Naive thymus-derived CD4-positive, alpha-beta T cell (primary cell): ENCODE measurements at regions of chr3 and their contacts with region 1.

Region 1: GRCh38 chr3:98039322-98040024 is 4.4 kb upstream of the GABRR3 start:
- DNase-seq: peak; percentile 51 to 91 (median 89)
- ATAC-seq: peak; percentile 98
- H3K4me3 ChIP-seq: peak overlapping the region; percentile 59
- H3K4me3 Mint-ChIP-seq: peak overlapping the region; percentile 11 to 95 (median 85)
- H3K27ac ChIP-seq: peak overlapping the region; percentile 75
- H3K27ac Mint-ChIP-seq: peak overlapping the region; percentile 57 to 99 (median 94)
- H3K4me1 ChIP-seq: no peaks in the 10 kb centered on the region
- H3K4me1 Mint-ChIP-seq: peaks cover 0 to 22% (median 0%) of the 10 kb centered on the region in 7 donors
- H3K27me3 ChIP-seq: peaks cover 0 to 3% of the 10 kb centered on the region in 2 donors
- H3K27me3 Mint-ChIP-seq: peaks cover 0 to 43% (median 17%) of the 10 kb centered on the region in 5 donors

Region 2: GRCh38 chr3:97821810-97822775 is 217.4 kb before region 1 on chr3 and contains the start of gene CRYBG3:
- CTCF ChIA-PET with region 1: no interaction called
- POLR2A ChIA-PET with region 1: no interaction called
- intact Hi-C with region 1: loop called in 1 of 2 experiments (anchors 1 kb)
- DNase-seq: peak; percentile 64 to 93 (median 81)
- ATAC-seq: peak; percentile 98
- H3K4me3 ChIP-seq: peak within 1 kb of the TSS; percentile 83
- H3K4me3 Mint-ChIP-seq: peak within 1 kb of the TSS; percentile 93 to 98 (median 95)
- H3K27ac ChIP-seq: peak within 1 kb of the TSS; percentile 52
- H3K27ac Mint-ChIP-seq: peak within 1 kb of the TSS; percentile 76 to 98 (median 87)
- H3K4me1 ChIP-seq: peaks cover 0 to 6% of the 10 kb centered on the region in 2 donors
- H3K4me1 Mint-ChIP-seq: peaks cover 14 to 36% (median 21%) of the 10 kb centered on the region in 7 donors
- H3K27me3 ChIP-seq: peaks cover 0 to 3% of the 10 kb centered on the region in 2 donors
- H3K27me3 Mint-ChIP-seq: peaks cover 4 to 29% (median 26%) of the 10 kb centered on the region in 5 donors
- total RNA-seq, gene CRYBG3: 1.8 to 11.2 (median 5.1) TPM

Region 3: DNA sequence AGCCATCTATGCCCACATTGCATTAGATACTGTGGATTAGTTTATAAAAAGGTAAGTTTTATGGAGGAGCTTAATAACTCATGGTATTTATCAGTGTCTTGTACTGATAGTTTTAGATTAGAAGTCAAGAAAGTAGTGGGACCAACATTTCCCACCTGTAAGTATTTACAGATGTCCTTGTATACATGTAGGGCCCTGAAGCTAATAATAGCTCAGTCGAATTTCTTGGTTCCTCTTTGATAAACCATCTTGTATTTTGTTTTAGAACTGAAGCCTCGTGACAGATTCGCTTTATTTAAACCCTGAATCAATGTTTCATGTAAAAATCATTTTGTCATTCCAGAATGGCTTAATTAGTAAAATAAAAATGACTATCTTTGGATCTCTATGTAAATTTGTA is 144.3 kb before region 1 on chr3:
- CTCF ChIA-PET with region 1: no interaction called
- POLR2A ChIA-PET with region 1: no interaction called
- intact Hi-C with region 1: no loop called
- DNase-seq: no peak
- ATAC-seq: no peak
- H3K4me3 ChIP-seq: no peak overlapping the region
- H3K4me3 Mint-ChIP-seq: no peak overlapping the region
- H3K27ac ChIP-seq: no peak overlapping the region
- H3K27ac Mint-ChIP-seq: no peak overlapping the region
- H3K4me1 ChIP-seq: no peaks in the 10 kb centered on the region
- H3K4me1 Mint-ChIP-seq: no peaks in the 10 kb centered on the region
- H3K27me3 ChIP-seq: no peaks in the 10 kb centered on the region
- H3K27me3 Mint-ChIP-seq: no peaks in the 10 kb centered on the region

Region 4: GRCh38 chr3:98022978-98023820 is 16.3 kb before region 1 on chr3:
- CTCF ChIA-PET with region 1: interaction called, 20 read pairs
- POLR2A ChIA-PET with region 1: no interaction called
- intact Hi-C with region 1: no loop called
- DNase-seq: peak; percentile 72 to 96 (median 85)
- ATAC-seq: peak; percentile 85
- H3K4me3 ChIP-seq: no peak overlapping the region
- H3K4me3 Mint-ChIP-seq: peak overlapping the region in 3 of 10 donors; percentile 0 to 58 (median 8)
- H3K27ac ChIP-seq: no peak overlapping the region
- H3K27ac Mint-ChIP-seq: peak overlapping the region in 7 of 9 donors; percentile 2 to 66 (median 20)
- H3K4me1 ChIP-seq: peaks cover 0 to under 1% of the 10 kb centered on the region in 2 donors
- H3K4me1 Mint-ChIP-seq: peaks cover 2 to 27% (median 10%) of the 10 kb centered on the region in 7 donors
- H3K27me3 ChIP-seq: no peaks in the 10 kb centered on the region
- H3K27me3 Mint-ChIP-seq: peaks cover 0 to 5% (median 0%) of the 10 kb centered on the region in 5 donors

Region 5: DNA sequence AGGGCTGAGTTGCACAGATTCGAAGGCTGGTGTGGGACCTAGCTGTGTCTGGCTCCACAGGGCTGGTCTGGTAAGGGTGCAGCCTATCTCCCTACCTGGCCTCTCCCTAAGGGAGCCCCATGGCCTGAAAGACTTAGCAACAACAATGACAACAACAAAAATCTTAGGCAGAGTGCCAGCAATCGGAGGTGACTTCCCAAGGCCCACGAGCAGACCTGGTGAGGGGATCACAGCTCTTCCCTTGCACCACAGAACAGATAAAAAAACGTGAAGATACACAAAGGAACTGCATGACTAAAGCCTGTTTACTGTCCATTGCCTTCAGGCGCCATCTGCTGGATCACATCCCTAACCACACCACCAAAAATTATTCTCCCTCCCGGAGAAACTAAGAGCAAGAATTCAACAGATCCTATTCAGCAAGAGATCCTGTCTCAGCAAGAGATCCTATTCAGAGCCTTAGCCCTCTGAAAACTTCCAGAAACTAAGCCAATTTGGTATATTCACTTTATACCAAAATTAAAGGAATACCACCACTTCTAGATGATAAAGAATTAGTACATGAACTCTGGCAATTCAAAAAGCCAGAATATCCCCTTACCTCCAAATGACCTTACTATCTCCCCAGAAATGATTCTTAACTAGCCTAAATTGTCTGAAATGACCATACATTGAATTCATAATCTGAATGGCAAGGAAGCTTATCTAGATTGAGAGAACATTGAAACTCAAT is 290.1 kb after region 1 on chr3:
- CTCF ChIA-PET with region 1: interaction called, 19 read pairs
- POLR2A ChIA-PET with region 1: interaction called, 3 read pairs
- intact Hi-C with region 1: loop called (anchors 1 kb)
- DNase-seq: peak in 8 of 9 donors; percentile 9 to 48 (median 34)
- ATAC-seq: peak; percentile 83
- H3K4me3 ChIP-seq: no peak overlapping the region
- H3K4me3 Mint-ChIP-seq: no peak overlapping the region
- H3K27ac ChIP-seq: no peak overlapping the region
- H3K27ac Mint-ChIP-seq: peak overlapping the region in 1 of 9 donors; percentile 8
- H3K4me1 ChIP-seq: no peaks in the 10 kb centered on the region
- H3K4me1 Mint-ChIP-seq: peaks cover 0 to 25% (median 0%) of the 10 kb centered on the region in 7 donors
- H3K27me3 ChIP-seq: no peaks in the 10 kb centered on the region
- H3K27me3 Mint-ChIP-seq: peaks cover 16 to 66% (median 32%) of the 10 kb centered on the region in 5 donors

Region 6: DNA sequence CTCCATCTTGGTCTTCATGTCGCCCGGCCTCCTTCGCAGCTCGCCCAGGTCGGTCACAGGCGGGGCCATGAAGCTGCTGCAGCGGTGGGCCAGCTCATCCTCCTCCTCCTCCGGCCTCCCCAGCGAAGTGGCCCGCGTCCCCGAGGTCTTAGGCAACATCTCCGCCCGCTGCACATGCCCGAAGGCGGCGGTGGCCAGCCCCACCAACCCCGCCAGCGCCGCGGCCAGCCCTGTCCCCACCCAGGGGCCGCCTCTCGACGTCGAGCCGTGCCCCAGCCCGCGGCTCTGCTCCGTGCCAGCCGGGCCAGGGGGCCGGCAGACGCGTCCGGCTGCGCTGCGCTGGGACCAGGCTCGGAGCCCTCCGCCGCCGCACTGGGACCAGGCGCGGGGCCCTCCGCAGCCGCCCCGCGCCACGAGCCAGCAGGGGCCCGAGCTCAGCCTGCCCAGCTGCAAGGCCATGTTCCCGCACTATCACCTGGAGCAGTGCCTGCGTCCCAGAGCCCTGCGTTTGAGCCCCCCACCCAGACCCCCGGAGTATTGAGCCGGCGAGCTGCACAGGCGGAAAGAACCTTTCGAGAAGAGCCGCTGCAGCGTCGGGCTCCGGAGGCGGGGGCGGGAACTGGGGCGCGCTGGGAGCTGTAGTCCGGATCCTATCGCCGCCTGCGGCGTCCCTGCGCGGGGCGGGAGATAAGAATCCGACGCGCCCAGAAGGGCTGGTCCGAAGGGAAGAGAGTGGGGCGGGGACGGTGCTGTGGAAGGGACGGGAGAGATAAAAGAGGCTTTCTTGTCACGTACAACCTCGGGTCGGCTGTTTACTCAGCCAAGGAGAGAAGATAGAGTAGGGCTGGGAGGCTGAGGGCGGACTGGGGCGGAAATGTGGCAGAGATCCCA is 553.8 kb after region 1 on chr3 and contains the start of gene CPOX:
- CTCF ChIA-PET with region 1: interaction called, 4 read pairs
- POLR2A ChIA-PET with region 1: no interaction called
- intact Hi-C with region 1: loop called (anchors 1 kb)
- DNase-seq: peak; percentile 62 to 85 (median 73)
- ATAC-seq: peak; percentile 95
- H3K4me3 ChIP-seq: peak within 1 kb of the TSS; percentile 85
- H3K4me3 Mint-ChIP-seq: peak within 1 kb of the TSS; percentile 91 to 99 (median 98)
- H3K27ac ChIP-seq: peak within 1 kb of the TSS; percentile 69
- H3K27ac Mint-ChIP-seq: peak within 1 kb of the TSS; percentile 87 to 98 (median 95)
- H3K4me1 ChIP-seq: peaks cover 11% of the 10 kb centered on the region in 2 donors
- H3K4me1 Mint-ChIP-seq: peaks cover 30 to 52% (median 40%) of the 10 kb centered on the region in 7 donors
- H3K27me3 ChIP-seq: no peaks in the 10 kb centered on the region
- H3K27me3 Mint-ChIP-seq: no peaks in the 10 kb centered on the region
- total RNA-seq, gene CPOX: 11.4 to 67.5 (median 21.6) TPM

Region 7: DNA sequence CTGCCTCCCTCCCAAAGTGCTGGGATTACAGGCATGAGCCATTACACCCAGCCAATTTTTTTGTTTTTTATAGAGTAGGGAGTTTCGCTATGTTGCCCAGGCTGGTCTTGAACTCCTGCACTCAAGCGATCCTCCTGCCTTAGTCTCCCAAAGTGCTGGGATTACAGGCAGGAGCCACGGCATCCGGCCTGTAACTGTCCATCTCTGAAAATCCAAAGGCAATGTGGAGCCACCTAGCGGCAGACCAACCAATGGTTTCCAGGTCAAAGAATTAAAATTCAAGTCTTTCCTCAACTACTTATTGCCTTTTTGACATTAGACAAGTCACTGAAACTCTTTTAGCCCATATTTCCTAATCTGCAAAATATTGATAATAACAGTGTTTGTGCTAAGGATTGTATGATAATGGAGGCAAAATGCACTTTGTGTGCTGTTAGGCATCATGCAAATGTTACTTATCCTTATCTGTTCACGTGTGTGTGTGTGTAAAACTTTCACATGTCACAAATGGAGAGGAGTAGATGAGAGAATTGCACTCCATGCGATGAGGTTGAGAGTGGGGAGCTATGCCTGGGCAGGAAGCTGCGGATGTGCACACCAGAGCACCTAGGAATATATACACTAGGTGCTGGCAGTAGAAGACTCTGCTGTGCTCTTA is 1647.6 kb after region 1 on chr3:
- CTCF ChIA-PET with region 1: no interaction called
- POLR2A ChIA-PET with region 1: no interaction called
- intact Hi-C with region 1: loop called (anchors 2 to 5 kb)
- DNase-seq: peak in 2 of 9 donors; percentile 12 to 31
- ATAC-seq: no peak
- H3K4me3 ChIP-seq: no peak overlapping the region
- H3K4me3 Mint-ChIP-seq: no peak overlapping the region
- H3K27ac ChIP-seq: no peak overlapping the region
- H3K27ac Mint-ChIP-seq: no peak overlapping the region
- H3K4me1 ChIP-seq: no peaks in the 10 kb centered on the region
- H3K4me1 Mint-ChIP-seq: no peaks in the 10 kb centered on the region
- H3K27me3 ChIP-seq: no peaks in the 10 kb centered on the region
- H3K27me3 Mint-ChIP-seq: peaks cover 4 to 20% (median 9%) of the 10 kb centered on the region in 5 donors